ENCODE measurements at regions of chr6 and their contacts with region 1.

Region 1: GRCh38 chr6:132768051-132768517 is 10.4 kb upstream of the VNN2 start:
- H3K4me3 Mint-ChIP-seq: peak overlapping the region; percentile 62
- H3K27ac Mint-ChIP-seq: no peak overlapping the region
- H3K4me1 Mint-ChIP-seq: peaks cover 20% of the 10 kb centered on the region
- H3K27me3 Mint-ChIP-seq: peaks cover 2% of the 10 kb centered on the region

Region 2: DNA sequence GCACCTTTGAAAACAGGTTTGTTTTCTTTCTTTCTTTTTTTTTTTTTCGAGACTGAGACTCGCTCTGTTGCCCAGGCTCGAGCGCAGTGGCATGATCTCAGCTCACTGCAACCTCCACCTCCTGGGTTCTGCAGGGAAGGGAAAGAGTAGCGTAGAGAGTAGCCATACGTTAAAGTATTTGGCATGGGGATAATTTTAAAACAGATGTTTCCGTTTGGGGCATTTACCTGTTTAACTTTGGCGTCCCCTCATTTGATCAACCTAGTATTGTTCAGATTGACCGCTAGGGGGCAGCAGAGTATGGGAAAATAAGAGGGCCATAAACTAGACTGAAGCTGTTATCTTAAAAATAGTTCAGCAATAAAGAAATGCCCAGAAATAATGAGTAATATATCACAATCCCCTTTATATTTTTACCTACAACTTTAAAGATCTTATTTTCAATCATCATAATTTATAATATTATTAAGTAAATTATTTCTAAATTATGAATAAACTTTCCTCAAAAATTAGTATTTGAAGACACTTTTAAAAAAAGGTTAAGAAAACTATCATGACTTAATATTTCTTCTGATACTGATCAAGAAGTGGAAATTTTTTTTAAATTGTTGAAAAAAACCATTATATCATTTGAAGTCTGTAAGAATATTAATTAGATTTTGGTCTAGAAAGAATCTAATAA is 237.7 kb before region 1 on chr6:
- intact Hi-C with region 1: loop called (anchors 2 kb)
- H3K4me3 Mint-ChIP-seq: peak overlapping the region; percentile 28
- H3K27ac Mint-ChIP-seq: no peak overlapping the region
- H3K4me1 Mint-ChIP-seq: peaks cover 9% of the 10 kb centered on the region
- H3K27me3 Mint-ChIP-seq: peaks cover 5% of the 10 kb centered on the region

Region 3: GRCh38 chr6:132669690-132670291 is 98.3 kb before region 1 on chr6:
- intact Hi-C with region 1: loop called (anchors 1 kb)
- H3K4me3 Mint-ChIP-seq: no peak overlapping the region
- H3K27ac Mint-ChIP-seq: peak overlapping the region; percentile 60
- H3K4me1 Mint-ChIP-seq: peaks cover 10% of the 10 kb centered on the region
- H3K27me3 Mint-ChIP-seq: no peaks in the 10 kb centered on the region

Region 4: GRCh38 chr6:132715204-132715603 is 52.9 kb before region 1 on chr6:
- intact Hi-C with region 1: loop called (anchors 10 kb)
- H3K4me3 Mint-ChIP-seq: no peak overlapping the region
- H3K27ac Mint-ChIP-seq: no peak overlapping the region
- H3K4me1 Mint-ChIP-seq: peaks cover 20% of the 10 kb centered on the region
- H3K27me3 Mint-ChIP-seq: peaks cover 1% of the 10 kb centered on the region

Region 5: GRCh38 chr6:132734694-132735635 is 33.1 kb before region 1 on chr6:
- intact Hi-C with region 1: loop called (anchors 5 kb)
- H3K4me3 Mint-ChIP-seq: no peak overlapping the region
- H3K27ac Mint-ChIP-seq: no peak overlapping the region
- H3K4me1 Mint-ChIP-seq: peaks cover 41% of the 10 kb centered on the region
- H3K27me3 Mint-ChIP-seq: no peaks in the 10 kb centered on the region

Region 6: DNA sequence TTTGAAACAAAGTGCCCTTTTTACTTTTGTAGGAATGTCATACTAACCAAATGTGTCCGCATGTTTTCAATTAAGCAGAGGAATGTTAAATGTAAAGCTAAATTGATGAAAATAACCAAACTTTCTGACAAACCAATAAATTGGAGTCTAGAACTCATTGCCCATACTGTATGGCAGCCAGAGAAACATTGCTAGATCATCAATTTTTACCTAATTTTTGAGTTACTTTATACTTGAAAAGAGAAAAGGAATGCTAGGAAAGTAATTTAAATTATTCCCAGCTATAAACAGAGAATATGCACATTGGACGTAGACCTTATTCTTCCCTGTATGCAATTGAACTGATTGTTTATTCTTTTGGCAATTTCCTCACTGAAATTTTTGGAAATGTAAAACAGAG is 90.7 kb after region 1 on chr6:
- intact Hi-C with region 1: no loop called
- H3K4me3 Mint-ChIP-seq: no peak overlapping the region
- H3K27ac Mint-ChIP-seq: no peak overlapping the region
- H3K4me1 Mint-ChIP-seq: no peaks in the 10 kb centered on the region
- H3K27me3 Mint-ChIP-seq: no peaks in the 10 kb centered on the region